AG04449 (cell line): ENCODE measurements at regions of chr2 and their contacts with region 1.

Region 1: GRCh38 chr2:74833418-74834233 is at the start of gene HK2:
- DNase-seq: no peak
- H3K4me3 ChIP-seq: peak within 1 kb of the TSS; percentile 93
- CTCF ChIP-seq: no peak

Region 2: DNA sequence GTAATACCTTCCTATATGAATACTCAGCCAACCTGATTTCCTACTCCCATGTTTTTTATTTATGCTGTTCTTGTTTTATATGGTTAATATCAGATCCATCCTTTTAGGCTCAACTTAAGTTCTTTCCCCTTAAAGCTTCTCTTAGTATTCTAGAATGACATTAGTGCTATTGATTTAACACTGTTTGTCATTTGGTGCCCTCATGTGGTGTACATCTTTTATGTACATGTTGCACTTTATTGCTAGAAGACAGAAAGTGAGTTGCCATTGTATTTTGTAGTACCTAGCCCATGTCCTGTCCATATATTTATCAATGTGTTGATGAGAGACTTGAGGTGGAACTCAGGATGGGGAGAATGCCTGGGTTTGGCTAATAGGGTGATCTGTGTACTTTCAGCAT is 301.4 kb before region 1 on chr2:
- CTCF ChIA-PET with region 1: no interaction called
- POLR2A ChIA-PET with region 1: no interaction called
- DNase-seq: no peak
- H3K4me3 ChIP-seq: no peak overlapping the region
- CTCF ChIP-seq: no peak

Region 3: DNA sequence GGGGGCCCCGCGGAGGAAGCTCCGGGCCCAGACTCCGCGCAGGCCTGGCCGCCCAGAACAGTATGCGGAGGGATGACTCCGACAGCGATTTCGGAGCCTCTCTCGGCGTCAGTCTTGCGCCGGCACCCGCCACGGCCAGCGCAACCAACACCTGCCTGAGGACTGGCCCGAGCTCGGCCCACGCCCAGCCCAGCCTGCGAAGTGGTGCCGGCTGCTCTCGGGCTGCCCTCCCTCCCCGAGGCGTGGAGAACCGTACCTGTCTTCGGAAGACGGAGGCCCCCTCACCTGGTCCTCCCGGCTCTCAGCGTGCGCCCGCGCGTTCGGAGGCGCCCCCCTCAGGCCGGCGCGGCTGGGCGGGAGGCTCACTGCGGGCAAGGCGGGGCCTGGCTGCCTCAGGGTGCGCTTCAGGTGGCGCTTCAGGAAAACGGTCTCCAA is 185.6 kb before region 1 on chr2 and contains the start of gene M1AP:
- CTCF ChIA-PET with region 1: no interaction called
- POLR2A ChIA-PET with region 1: no interaction called
- DNase-seq: no peak
- H3K4me3 ChIP-seq: peak within 1 kb of the TSS; percentile 25
- CTCF ChIP-seq: peak; percentile 21

Region 4: GRCh38 chr2:74740389-74741075 is 93.1 kb before region 1 on chr2:
- CTCF ChIA-PET with region 1: interaction called, 6 read pairs
- POLR2A ChIA-PET with region 1: interaction called, 10 read pairs
- DNase-seq: peak; percentile 94
- H3K4me3 ChIP-seq: no peak overlapping the region; the same call in none of the 2 replicates
- CTCF ChIP-seq: no peak

Region 5: GRCh38 chr2:74789271-74789670 is 44.4 kb before region 1 on chr2:
- CTCF ChIA-PET with region 1: no interaction called
- POLR2A ChIA-PET with region 1: no interaction called
- DNase-seq: no peak
- H3K4me3 ChIP-seq: no peak overlapping the region
- CTCF ChIP-seq: no peak

Region 6: DNA sequence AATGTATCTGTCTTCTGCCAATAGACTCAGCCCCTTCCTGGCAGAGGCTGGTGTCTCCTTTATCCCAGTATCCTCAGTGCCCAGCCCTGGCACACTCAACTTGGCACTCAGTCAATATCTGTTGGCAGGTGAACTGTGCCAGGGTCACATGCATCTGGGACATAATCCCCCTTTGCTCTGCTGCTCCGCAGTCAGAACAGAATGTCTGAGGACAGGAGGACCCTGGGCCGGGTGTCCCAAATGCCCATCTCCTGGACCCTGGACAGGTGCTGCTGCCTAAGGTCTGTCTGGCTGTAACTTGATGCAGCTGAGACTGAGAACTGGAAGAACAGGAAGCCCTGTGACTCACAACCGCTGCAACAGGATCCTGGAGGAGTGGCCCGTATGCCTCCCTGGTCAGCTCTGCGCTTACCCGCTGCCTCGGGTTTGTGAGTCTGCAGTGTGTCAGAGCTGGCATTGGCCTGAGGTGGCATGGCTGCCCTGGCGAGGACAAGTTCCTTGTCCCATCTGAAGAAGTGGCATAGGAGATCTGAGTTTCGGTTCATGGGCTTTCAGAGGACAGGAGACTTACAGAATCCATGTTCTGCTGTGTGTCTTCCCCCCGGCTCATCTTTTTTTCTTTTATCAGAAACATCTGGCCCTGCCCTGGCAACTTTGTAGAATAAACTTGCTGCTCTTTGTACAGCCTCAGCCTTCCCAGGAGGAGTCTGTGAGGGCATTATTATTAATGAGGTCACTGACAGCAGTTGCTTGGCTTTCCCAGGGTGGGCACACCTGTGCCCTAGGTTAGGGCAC is 11.8 kb after region 1 on chr2:
- CTCF ChIA-PET with region 1: interaction called, 24 read pairs
- POLR2A ChIA-PET with region 1: interaction called, 3 read pairs
- DNase-seq: peak; percentile 52
- H3K4me3 ChIP-seq: peak overlapping the region; percentile 25
- CTCF ChIP-seq: no peak

Region 7: DNA sequence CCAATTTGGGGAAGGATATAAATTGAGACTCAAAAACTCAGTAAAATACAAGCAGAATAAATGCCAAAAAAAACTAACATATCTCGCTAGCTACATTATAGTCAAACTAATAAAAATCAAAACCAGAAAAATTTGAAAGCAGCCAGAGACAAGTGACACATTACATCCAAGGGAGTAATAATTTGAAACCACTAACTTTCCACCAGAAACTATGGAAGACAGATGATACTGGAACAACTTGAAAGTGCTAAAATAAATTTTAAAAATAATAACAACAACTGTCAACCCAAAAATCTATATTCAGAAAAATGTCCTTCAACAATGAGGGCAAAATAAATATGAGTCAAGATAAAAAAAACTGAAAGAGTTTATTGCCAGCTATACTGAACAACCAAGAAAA is 616.4 kb after region 1 on chr2:
- CTCF ChIA-PET with region 1: no interaction called
- POLR2A ChIA-PET with region 1: no interaction called
- DNase-seq: no peak
- H3K4me3 ChIP-seq: no peak overlapping the region
- CTCF ChIP-seq: no peak